Posterior vena cava (tissue), 2 donors: ENCODE measurements at regions of chr11 and their contacts with region 1.

Region 1: GRCh38 chr11:83801780-83802179 is 515.6 kb upstream of the CCDC90B start:
- DNase-seq: no peak

Region 2: GRCh38 chr11:82676473-82677094 is 1125.2 kb before region 1 on chr11:
- intact Hi-C with region 1: loop called in 1 of 2 experiments (anchors 10 kb)
- DNase-seq: no peak